ENCODE measurements at regions of chrX and their contacts with region 1.

Region 1: DNA sequence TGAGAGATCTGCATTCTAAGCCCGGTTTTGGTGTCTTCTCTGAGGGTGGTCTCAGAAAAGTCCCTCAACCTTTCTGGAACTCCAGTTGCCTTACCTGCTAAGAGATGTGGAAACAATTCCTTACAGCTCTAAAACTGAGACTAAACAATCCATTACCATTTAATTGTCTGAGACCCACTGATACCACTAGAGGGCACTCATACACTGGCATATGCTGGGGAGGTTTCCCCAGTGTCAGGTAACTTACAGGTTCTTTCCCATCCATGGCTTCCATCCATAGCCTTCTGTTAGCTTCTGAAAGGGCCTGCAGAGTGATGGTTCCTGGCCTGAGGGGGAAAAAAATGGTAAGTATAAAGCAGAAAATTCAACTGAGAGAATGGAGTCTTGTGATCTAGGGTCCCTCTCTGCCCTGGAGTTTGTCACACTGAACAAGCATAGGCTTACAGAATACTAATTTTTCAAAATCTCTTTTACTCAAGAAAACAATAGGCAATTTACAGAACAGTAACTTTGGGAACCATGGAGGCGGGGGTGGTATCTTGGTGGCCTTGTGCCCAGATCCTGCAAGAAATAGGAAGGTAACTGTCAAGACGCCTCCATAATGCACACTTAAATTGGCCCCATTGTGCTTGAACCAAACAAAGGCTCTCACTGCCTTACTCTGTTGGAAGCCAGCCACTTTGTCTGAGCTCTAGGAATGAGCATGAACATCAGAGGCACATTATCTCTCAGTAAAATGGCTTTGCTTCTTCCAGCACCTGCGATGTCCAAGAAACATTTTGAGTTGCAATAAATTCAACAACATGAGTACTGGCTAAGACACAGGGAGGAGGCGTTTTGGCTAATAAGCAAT is 236.1 kb downstream of the OPHN1 start:
- DNase-seq: peak in 5 of 9 donors; percentile 13 to 19 (median 16)
- ATAC-seq: peak; percentile 63
- H3K4me3 ChIP-seq: no peak overlapping the region
- H3K4me3 Mint-ChIP-seq: no peak overlapping the region
- H3K27ac ChIP-seq: no peak overlapping the region
- H3K27ac Mint-ChIP-seq: no peak overlapping the region
- H3K4me1 ChIP-seq: no peaks in the 10 kb centered on the region
- H3K4me1 Mint-ChIP-seq: peaks cover 0 to 17% (median 2%) of the 10 kb centered on the region in 7 donors
- H3K27me3 ChIP-seq: no peaks in the 10 kb centered on the region
- H3K27me3 Mint-ChIP-seq: peaks cover 0 to 3% (median 0%) of the 10 kb centered on the region in 5 donors

Region 2: DNA sequence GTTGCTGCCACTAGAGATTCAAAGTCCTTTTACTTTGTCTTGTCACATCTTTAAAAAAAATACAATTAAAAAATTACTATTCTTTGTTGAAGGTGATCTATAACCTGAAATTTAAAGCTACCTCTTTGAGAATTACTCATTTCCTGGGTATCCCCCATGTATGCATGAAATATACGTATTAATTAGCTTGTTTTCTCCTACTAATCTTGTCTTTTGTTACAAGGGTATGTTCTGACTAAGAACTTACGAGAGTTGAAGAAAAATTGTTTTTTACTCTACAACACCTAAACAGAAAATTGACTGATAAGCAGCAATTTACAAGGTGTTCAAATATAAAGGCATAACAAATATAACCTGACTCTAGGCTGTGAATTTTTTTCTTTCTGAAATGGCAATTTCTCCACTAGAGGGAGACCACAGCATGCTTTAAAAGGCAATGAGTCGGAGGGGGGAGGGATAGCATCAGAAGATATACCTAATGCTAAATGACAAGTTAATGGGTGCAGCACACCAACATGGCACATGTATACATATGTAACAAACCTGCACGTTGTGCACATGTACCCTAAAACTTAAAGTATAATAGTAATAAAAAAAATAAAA is 13.5 kb before region 1 on chrX:
- CTCF ChIA-PET with region 1: no interaction called
- POLR2A ChIA-PET with region 1: no interaction called
- intact Hi-C with region 1: no loop called
- DNase-seq: peak in 2 of 9 donors; percentile 8 to 20
- ATAC-seq: peak; percentile 31
- H3K4me3 ChIP-seq: no peak overlapping the region
- H3K4me3 Mint-ChIP-seq: no peak overlapping the region
- H3K27ac ChIP-seq: no peak overlapping the region
- H3K27ac Mint-ChIP-seq: peak overlapping the region in 1 of 9 donors; percentile 67
- H3K4me1 ChIP-seq: no peaks in the 10 kb centered on the region
- H3K4me1 Mint-ChIP-seq: peaks cover 0 to 25% (median 6%) of the 10 kb centered on the region in 7 donors
- H3K27me3 ChIP-seq: no peaks in the 10 kb centered on the region
- H3K27me3 Mint-ChIP-seq: peaks cover 0 to 2% (median 0%) of the 10 kb centered on the region in 5 donors

Region 3: DNA sequence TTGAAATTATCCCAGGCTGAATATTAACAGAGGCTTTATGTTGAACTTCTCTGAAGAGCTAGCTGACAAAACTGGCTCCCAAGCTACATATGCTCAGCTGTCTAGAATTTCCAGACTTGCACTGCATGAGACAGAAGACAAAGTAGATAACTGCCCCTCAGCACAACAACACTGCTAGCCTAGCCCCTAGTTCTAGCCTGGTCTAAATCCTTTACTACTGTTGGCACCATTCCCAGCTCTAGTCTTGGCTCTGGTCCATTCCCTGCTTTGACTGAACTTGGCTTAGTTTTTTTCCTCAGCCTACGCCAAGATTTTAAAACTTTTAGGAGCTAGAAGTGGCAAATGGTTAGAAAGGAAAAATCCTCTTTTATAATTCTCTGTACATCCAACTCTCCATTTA is 243.8 kb after region 1 on chrX:
- CTCF ChIA-PET with region 1: no interaction called
- POLR2A ChIA-PET with region 1: no interaction called
- intact Hi-C with region 1: no loop called
- DNase-seq: no peak
- ATAC-seq: no peak
- H3K4me3 ChIP-seq: no peak overlapping the region
- H3K4me3 Mint-ChIP-seq: no peak overlapping the region
- H3K27ac ChIP-seq: no peak overlapping the region
- H3K27ac Mint-ChIP-seq: no peak overlapping the region
- H3K4me1 ChIP-seq: peaks cover 0 to 6% of the 10 kb centered on the region in 2 donors
- H3K4me1 Mint-ChIP-seq: peaks cover 0 to 10% (median 8%) of the 10 kb centered on the region in 7 donors
- H3K27me3 ChIP-seq: no peaks in the 10 kb centered on the region
- H3K27me3 Mint-ChIP-seq: peaks cover 0 to 23% (median 5%) of the 10 kb centered on the region in 5 donors

Region 4: DNA sequence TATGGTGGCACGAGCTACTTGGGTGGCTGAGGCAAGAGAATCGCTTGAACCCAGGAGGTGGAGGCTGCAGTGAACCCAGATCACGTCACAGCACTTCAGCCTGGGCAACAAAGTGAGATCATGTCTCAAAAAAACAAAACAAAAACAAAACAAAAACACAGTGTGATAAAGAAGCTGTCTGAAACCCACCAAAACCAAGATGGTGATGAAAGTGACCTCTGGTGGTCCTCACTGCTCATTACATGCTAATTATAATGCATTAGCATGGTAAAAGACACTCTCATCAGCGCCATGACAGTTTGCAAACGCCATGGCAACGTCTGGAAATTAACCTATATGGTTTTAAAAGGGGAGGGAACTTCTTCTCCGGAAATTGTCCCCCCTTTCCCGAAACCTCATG is 265.5 kb after region 1 on chrX:
- CTCF ChIA-PET with region 1: no interaction called
- POLR2A ChIA-PET with region 1: no interaction called
- intact Hi-C with region 1: loop called in 1 of 2 experiments (anchors 10 kb)
- DNase-seq: peak in 3 of 9 donors; percentile 0 to 23 (median 13)
- ATAC-seq: peak; percentile 31
- H3K4me3 ChIP-seq: no peak overlapping the region
- H3K4me3 Mint-ChIP-seq: no peak overlapping the region
- H3K27ac ChIP-seq: no peak overlapping the region
- H3K27ac Mint-ChIP-seq: no peak overlapping the region
- H3K4me1 ChIP-seq: no peaks in the 10 kb centered on the region
- H3K4me1 Mint-ChIP-seq: no peaks in the 10 kb centered on the region
- H3K27me3 ChIP-seq: no peaks in the 10 kb centered on the region
- H3K27me3 Mint-ChIP-seq: no peaks in the 10 kb centered on the region

Region 5: DNA sequence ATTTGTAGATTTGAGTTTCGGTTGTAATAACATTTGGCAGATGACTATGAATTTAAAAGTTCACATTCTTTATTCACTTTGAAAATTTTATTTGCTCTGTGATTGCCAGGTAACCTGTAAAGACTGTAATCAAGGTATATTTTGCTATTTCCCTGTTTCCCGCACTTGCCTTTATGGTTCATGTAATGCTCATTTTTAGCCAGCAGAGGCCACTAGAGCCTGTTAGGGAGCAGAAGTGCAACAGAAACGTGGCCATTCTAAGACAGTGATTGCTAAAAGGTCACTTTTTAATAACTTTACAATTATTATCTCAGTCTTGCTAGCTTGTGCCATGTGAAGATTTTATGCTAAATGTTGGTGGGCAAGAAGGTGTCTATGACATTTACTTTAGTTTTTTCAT is 314.1 kb after region 1 on chrX:
- CTCF ChIA-PET with region 1: no interaction called
- POLR2A ChIA-PET with region 1: no interaction called
- intact Hi-C with region 1: loop called in 1 of 2 experiments (anchors 5 kb)
- DNase-seq: peak in 6 of 9 donors; percentile 10 to 43 (median 29)
- ATAC-seq: peak; percentile 65
- H3K4me3 ChIP-seq: no peak overlapping the region
- H3K4me3 Mint-ChIP-seq: no peak overlapping the region
- H3K27ac ChIP-seq: no peak overlapping the region
- H3K27ac Mint-ChIP-seq: peak overlapping the region in 2 of 9 donors; percentile 10 to 29
- H3K4me1 ChIP-seq: peaks cover 0 to 5% of the 10 kb centered on the region in 2 donors
- H3K4me1 Mint-ChIP-seq: peaks cover 13 to 38% (median 27%) of the 10 kb centered on the region in 7 donors
- H3K27me3 ChIP-seq: no peaks in the 10 kb centered on the region
- H3K27me3 Mint-ChIP-seq: no peaks in the 10 kb centered on the region

Region 6: GRCh38 chrX:68710870-68711576 is 513.9 kb after region 1 on chrX:
- CTCF ChIA-PET with region 1: no interaction called
- POLR2A ChIA-PET with region 1: no interaction called
- intact Hi-C with region 1: loop called in 1 of 2 experiments (anchors 1 kb)
- DNase-seq: peak in 1 of 9 donors; percentile 21
- ATAC-seq: no peak
- H3K4me3 ChIP-seq: no peak overlapping the region
- H3K4me3 Mint-ChIP-seq: no peak overlapping the region
- H3K27ac ChIP-seq: no peak overlapping the region
- H3K27ac Mint-ChIP-seq: no peak overlapping the region
- H3K4me1 ChIP-seq: no peaks in the 10 kb centered on the region
- H3K4me1 Mint-ChIP-seq: no peaks in the 10 kb centered on the region
- H3K27me3 ChIP-seq: no peaks in the 10 kb centered on the region
- H3K27me3 Mint-ChIP-seq: no peaks in the 10 kb centered on the region

Region 7: GRCh38 chrX:69387567-69388487 is 1190.7 kb after region 1 on chrX:
- CTCF ChIA-PET with region 1: no interaction called
- POLR2A ChIA-PET with region 1: no interaction called
- intact Hi-C with region 1: loop called (anchors 2 to 5 kb)
- DNase-seq: peak in 7 of 9 donors; percentile 0 to 27 (median 11)
- ATAC-seq: peak; percentile 45
- H3K4me3 ChIP-seq: no peak overlapping the region
- H3K4me3 Mint-ChIP-seq: no peak overlapping the region
- H3K27ac ChIP-seq: no peak overlapping the region
- H3K27ac Mint-ChIP-seq: no peak overlapping the region
- H3K4me1 ChIP-seq: no peaks in the 10 kb centered on the region
- H3K4me1 Mint-ChIP-seq: peaks cover 0 to 4% (median 0%) of the 10 kb centered on the region in 7 donors
- H3K27me3 ChIP-seq: no peaks in the 10 kb centered on the region
- H3K27me3 Mint-ChIP-seq: peaks cover 0 to 20% (median 4%) of the 10 kb centered on the region in 5 donors

Measured in naive thymus-derived CD4-positive, alpha-beta T cell (primary cell).